BJ (cell line): ENCODE measurements at regions of chr10 and their contacts with region 1.

Region 1: DNA sequence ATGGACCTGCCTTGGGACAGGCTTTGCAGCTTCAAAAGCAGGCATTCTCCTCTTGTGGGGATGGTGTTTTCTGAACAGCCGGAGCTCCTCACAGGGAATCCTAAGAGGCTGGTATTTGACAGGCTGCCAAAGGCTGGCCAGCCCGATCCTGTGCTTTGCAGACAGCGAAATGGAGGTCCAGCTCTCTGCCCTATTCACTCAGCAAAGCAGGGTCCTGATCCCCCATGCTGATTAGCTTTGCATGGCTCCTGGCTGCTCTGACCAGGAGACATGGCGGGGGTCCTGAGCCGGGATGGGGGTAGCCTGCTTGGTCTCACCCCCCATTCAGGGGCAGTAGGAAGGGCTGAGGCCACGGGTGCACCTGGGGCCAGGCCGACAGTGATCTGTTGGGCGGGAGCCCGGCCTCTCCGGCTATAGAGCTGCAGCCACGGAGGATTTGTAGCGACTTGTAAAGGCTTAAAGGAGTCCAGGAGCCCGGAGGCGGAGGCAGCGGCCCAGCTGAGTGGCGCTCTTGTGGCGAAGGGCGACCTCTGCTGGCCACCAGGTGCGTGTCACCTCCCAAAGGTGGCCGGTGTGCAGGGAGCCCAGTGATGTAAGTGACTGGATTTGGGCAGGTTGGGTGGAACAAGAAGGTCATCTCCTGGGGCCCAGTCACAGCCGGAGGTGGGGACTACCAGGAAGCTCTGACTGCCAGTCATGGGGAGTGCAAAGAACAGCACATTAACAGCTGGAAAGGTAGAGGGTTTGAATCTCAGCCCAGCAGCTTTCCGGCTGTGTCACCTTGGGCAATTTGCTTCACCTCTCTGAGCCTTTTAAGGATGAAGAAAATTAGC is 126.5 kb downstream of the ZMIZ1 start:
- DNase-seq: no peak
- H3K4me3 ChIP-seq: no peak overlapping the region
- H3K27me3 ChIP-seq: no peaks in the 10 kb centered on the region
- CTCF ChIP-seq: peak; percentile 90

Region 2: GRCh38 chr10:78211561-78212051 is 983.7 kb before region 1 on chr10:
- CTCF ChIA-PET with region 1: interaction called, 16 read pairs
- POLR2A ChIA-PET with region 1: no interaction called
- DNase-seq: no peak
- H3K4me3 ChIP-seq: no peak overlapping the region
- H3K27me3 ChIP-seq: no peaks in the 10 kb centered on the region
- CTCF ChIP-seq: peak; percentile 70

Region 3: DNA sequence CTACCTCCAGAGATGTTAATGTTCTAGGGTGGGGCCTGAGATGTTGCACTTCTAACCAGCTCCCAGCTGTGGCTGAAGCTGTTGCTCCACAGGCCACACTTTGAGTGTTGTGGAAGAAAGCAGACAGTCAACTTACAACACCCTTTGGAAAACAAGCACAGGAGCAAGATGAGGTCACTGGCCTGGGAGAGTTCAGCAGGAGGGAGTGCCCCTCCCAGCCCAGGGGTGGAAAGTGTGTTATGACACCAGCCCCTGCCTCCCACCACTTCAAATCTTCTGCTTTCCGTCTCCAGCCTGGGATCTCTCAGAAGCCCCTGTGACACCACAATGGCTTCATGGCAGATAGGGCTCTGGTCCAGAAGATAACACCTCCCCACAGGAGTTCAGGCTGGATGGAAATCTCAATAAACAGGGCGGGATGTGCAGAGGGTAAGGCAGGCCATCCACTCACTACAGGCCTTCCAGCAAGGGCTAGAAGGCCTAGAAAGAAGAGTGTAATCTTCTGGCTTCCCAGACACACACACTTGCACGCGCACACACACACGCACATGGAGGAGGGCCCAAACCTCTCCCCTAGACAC is 175.3 kb before region 1 on chr10:
- CTCF ChIA-PET with region 1: no interaction called
- POLR2A ChIA-PET with region 1: no interaction called
- DNase-seq: no peak
- H3K4me3 ChIP-seq: no peak overlapping the region
- H3K27me3 ChIP-seq: 0 out of 2 replicates have a peak, but pooled peaks cover under 1% of the 10 kb centered on the region
- CTCF ChIP-seq: no peak

Region 4: GRCh38 chr10:79067241-79068202 is 127.8 kb before region 1 on chr10:
- CTCF ChIA-PET with region 1: interaction called, 31 read pairs
- POLR2A ChIA-PET with region 1: no interaction called
- DNase-seq: no peak
- H3K4me3 ChIP-seq: peak overlapping the region; percentile 58
- H3K27me3 ChIP-seq: no peaks in the 10 kb centered on the region
- CTCF ChIP-seq: peak; percentile 36

Region 5: GRCh38 chr10:79105150-79105739 is 90.1 kb before region 1 on chr10:
- CTCF ChIA-PET with region 1: interaction called, 17 read pairs
- POLR2A ChIA-PET with region 1: no interaction called
- DNase-seq: no peak
- H3K4me3 ChIP-seq: no peak overlapping the region
- H3K27me3 ChIP-seq: no peaks in the 10 kb centered on the region
- CTCF ChIP-seq: 0 out of 2 replicates have a peak, but pooled peaks have one; percentile 10

Region 6: GRCh38 chr10:79155301-79156081 is 39.8 kb before region 1 on chr10:
- CTCF ChIA-PET with region 1: interaction called, 24 read pairs
- POLR2A ChIA-PET with region 1: no interaction called
- DNase-seq: no peak
- H3K4me3 ChIP-seq: no peak overlapping the region
- H3K27me3 ChIP-seq: no peaks in the 10 kb centered on the region
- CTCF ChIP-seq: no peak

Region 7: DNA sequence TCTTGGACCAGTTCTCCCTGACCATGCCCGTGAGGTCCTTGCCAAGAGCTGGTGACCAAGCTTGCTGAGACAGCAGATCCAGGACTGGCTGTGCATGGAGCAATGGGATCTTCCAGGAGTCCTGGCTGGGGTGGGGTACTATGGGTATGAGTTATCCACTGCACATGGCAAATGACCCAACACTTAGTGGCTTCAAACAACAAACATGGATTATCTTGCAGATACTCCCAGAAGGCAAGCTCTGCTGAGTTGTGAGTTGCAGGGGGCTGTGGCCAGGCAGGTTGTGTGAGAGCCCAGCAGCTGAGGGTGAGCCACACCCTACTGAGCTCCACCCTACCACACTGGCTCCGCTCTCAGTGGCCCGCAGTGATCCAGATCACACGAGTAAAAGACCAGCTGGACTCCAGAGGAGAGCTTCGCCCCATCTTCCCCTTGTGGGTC is 147.8 kb after region 1 on chr10:
- CTCF ChIA-PET with region 1: no interaction called
- POLR2A ChIA-PET with region 1: no interaction called
- DNase-seq: no peak
- H3K4me3 ChIP-seq: no peak overlapping the region
- H3K27me3 ChIP-seq: no peaks in the 10 kb centered on the region
- CTCF ChIP-seq: no peak